T-cell (primary cell): ENCODE measurements at regions of chr13 and their contacts with region 1.

Region 1: DNA sequence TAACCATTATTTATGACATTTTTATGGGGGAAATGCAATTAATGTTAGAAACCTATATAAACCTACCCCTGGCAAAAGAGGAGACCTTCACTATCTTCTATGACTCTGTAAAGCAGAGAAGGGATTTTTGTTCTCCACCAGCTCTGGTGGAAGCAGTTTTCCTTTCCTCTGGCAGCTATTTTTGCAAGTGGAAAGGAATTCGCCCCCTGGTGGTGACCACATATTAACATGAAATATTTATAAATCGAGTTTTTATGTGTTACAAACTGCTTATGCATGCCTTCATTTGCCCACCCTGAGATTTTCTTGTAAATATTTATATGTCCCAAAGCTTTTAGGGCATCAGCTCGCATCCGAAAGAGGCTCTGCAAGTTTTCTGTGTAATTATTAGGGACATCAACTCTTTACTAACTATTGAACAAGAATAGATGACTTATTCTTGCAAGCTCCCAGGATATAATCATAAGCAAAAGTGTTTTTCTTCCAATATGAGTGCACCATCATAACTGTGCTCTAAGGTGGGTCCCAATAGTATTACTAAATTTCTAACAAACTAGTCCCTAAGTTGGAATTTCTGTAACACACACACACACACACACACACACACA is 62.4 kb downstream of the SERTM1 start:
- DNase-seq: peak in 21 of 35 experiments; percentile 1 to 53 (median 8)
- ATAC-seq: no peak
- H3K4me3 ChIP-seq: no peak overlapping the region
- H3K4me3 Mint-ChIP-seq: no peak overlapping the region
- H3K27ac ChIP-seq: no peak overlapping the region
- H3K27ac Mint-ChIP-seq: no peak overlapping the region
- H3K4me1 ChIP-seq: no peaks in the 10 kb centered on the region
- H3K4me1 Mint-ChIP-seq: no peaks in the 10 kb centered on the region
- H3K27me3 ChIP-seq: no peaks in the 10 kb centered on the region
- H3K27me3 Mint-ChIP-seq: no peaks in the 10 kb centered on the region

Region 2: DNA sequence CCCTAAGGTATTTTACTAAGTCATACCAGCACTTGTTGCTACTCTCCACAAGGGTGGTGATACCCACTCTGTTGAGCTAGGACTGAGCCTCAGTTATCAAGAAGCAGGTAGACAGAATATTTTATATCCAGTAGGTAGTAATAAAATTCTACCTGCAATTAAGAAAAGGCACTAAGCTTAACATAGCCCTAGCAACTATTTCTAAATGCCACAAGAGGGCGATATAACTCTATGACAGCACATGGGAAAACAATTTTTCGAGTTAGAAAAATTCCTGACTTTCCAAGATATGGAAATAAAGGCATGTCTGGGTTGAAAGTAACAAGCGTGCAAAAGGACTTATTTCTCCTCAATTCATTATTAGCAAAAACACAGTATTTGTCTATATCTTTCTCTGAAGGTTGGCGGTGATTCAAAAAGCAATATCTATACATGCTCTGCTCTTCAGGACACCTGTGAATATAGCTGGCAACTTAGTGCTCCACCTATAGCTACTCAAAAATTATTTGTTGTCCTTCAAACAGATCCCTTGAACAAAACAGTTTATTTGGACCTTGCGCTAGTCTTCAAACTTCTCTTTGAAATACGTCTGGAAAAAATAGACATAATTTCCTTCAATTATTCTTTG is 453.3 kb before region 1 on chr13:
- CTCF ChIA-PET with region 1: interaction called in 1 of 2 experiments, 11 read pairs
- POLR2A ChIA-PET with region 1: no interaction called
- DNase-seq: peak in 1 of 35 experiments; percentile 31
- ATAC-seq: no peak
- H3K4me3 ChIP-seq: no peak overlapping the region
- H3K4me3 Mint-ChIP-seq: no peak overlapping the region
- H3K27ac ChIP-seq: no peak overlapping the region
- H3K27ac Mint-ChIP-seq: no peak overlapping the region
- H3K4me1 ChIP-seq: no peaks in the 10 kb centered on the region
- H3K4me1 Mint-ChIP-seq: no peaks in the 10 kb centered on the region
- H3K27me3 ChIP-seq: peaks cover 0 to under 1% of the 10 kb centered on the region in 2 experiments
- H3K27me3 Mint-ChIP-seq: peaks cover 8 to 15% of the 10 kb centered on the region in 2 donors

Region 3: GRCh38 chr13:36346222-36347083 is 389.8 kb before region 1 on chr13 and contains the start of gene SPART:
- CTCF ChIA-PET with region 1: interaction called, 9 to 10 read pairs
- POLR2A ChIA-PET with region 1: no interaction called
- DNase-seq: peak; percentile 59 to 91 (median 82)
- ATAC-seq: peak; percentile 81 to 89 (median 84)
- H3K4me3 ChIP-seq: peak within 1 kb of the TSS; percentile 80 to 92
- H3K4me3 Mint-ChIP-seq: peak within 1 kb of the TSS; percentile 85 to 93 (median 93)
- H3K27ac ChIP-seq: peak within 1 kb of the TSS; percentile 96
- H3K27ac Mint-ChIP-seq: peak within 1 kb of the TSS; percentile 94 to 95
- H3K4me1 ChIP-seq: peaks cover 9 to 11% of the 10 kb centered on the region in 2 experiments
- H3K4me1 Mint-ChIP-seq: peaks cover 39 to 43% (median 42%) of the 10 kb centered on the region in 3 donors
- H3K27me3 ChIP-seq: peaks cover 0 to 11% of the 10 kb centered on the region in 2 experiments
- H3K27me3 Mint-ChIP-seq: peaks cover 0 to 5% of the 10 kb centered on the region in 2 donors
- total RNA-seq, gene SPART: 20.2 to 33.3 (median 28.8) TPM

Region 4: GRCh38 chr13:36475468-36475867 is 260.8 kb before region 1 on chr13:
- CTCF ChIA-PET with region 1: no interaction called
- POLR2A ChIA-PET with region 1: no interaction called
- DNase-seq: no peak
- ATAC-seq: no peak
- H3K4me3 ChIP-seq: no peak overlapping the region
- H3K4me3 Mint-ChIP-seq: no peak overlapping the region
- H3K27ac ChIP-seq: no peak overlapping the region
- H3K27ac Mint-ChIP-seq: no peak overlapping the region
- H3K4me1 ChIP-seq: no peaks in the 10 kb centered on the region
- H3K4me1 Mint-ChIP-seq: no peaks in the 10 kb centered on the region
- H3K27me3 ChIP-seq: no peaks in the 10 kb centered on the region
- H3K27me3 Mint-ChIP-seq: peaks cover 2 to 5% of the 10 kb centered on the region in 2 donors

Region 5: GRCh38 chr13:37029617-37030016 is 293.4 kb after region 1 on chr13:
- CTCF ChIA-PET with region 1: no interaction called
- POLR2A ChIA-PET with region 1: no interaction called
- DNase-seq: no peak
- ATAC-seq: no peak
- H3K4me3 ChIP-seq: no peak overlapping the region
- H3K4me3 Mint-ChIP-seq: no peak overlapping the region
- H3K27ac ChIP-seq: no peak overlapping the region
- H3K27ac Mint-ChIP-seq: no peak overlapping the region
- H3K4me1 ChIP-seq: no peaks in the 10 kb centered on the region
- H3K4me1 Mint-ChIP-seq: peaks cover 0 to 2% (median 0%) of the 10 kb centered on the region in 3 donors
- H3K27me3 ChIP-seq: no peaks in the 10 kb centered on the region
- H3K27me3 Mint-ChIP-seq: no peaks in the 10 kb centered on the region